A673 (cell line): ENCODE measurements at regions of chr3 and their contacts with region 1.

Region 1: DNA sequence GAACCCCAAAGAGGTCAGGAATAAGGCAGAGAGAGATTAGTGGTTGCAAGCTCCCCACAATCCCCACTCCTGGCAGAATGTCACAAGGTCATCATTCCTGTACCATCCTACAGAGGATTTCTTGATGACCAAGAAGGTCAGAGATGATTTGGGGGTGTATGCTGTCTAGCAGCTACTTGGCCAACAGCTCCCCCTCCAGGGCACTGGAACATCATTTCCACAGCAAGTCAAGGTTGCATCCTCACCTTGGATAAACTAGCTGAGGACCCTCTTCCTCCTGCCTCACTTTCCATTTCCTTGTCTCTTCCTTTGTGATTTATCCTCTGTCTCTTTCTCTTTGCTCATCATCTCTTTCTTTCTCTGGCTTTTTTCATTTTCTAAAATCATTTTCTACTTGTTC is 106.3 kb downstream of the PROS1 start:
- DNase-seq: no peak
- H3K4me3 ChIP-seq: no peak overlapping the region
- H3K27ac ChIP-seq: no peak overlapping the region
- H3K4me1 ChIP-seq: peaks cover 7% of the 10 kb centered on the region
- H3K27me3 ChIP-seq: peaks cover 30% of the 10 kb centered on the region
- CTCF ChIP-seq: peak; percentile 27; the same call in 1 of the 2 replicates

Region 2: GRCh38 chr3:93931597-93932229 is 64.3 kb after region 1 on chr3:
- CTCF ChIA-PET with region 1: no interaction called
- POLR2A ChIA-PET with region 1: no interaction called
- intact Hi-C with region 1: loop called (anchors 10 kb)
- DNase-seq: no peak
- H3K4me3 ChIP-seq: no peak overlapping the region
- H3K27ac ChIP-seq: no peak overlapping the region
- H3K4me1 ChIP-seq: no peaks in the 10 kb centered on the region
- H3K27me3 ChIP-seq: no peaks in the 10 kb centered on the region
- CTCF ChIP-seq: no peak